Naive thymus-derived CD4-positive, alpha-beta T cell (primary cell): ENCODE measurements at regions of chr6 and their contacts with region 1.

Region 1: GRCh38 chr6:8063761-8064637 is at the start of gene BLOC1S5:
- DNase-seq: peak; percentile 89 to 99 (median 97)
- ATAC-seq: peak; percentile 98
- H3K4me3 ChIP-seq: peak within 1 kb of the TSS; percentile 89
- H3K4me3 Mint-ChIP-seq: peak within 1 kb of the TSS; percentile 91 to 98 (median 95)
- H3K27ac ChIP-seq: peak within 1 kb of the TSS; percentile 92
- H3K27ac Mint-ChIP-seq: peak within 1 kb of the TSS; percentile 91 to 97 (median 95)
- H3K4me1 ChIP-seq: peaks cover 10% of the 10 kb centered on the region in 2 donors
- H3K4me1 Mint-ChIP-seq: peaks cover 9 to 38% (median 28%) of the 10 kb centered on the region in 7 donors
- H3K27me3 ChIP-seq: no peaks in the 10 kb centered on the region
- H3K27me3 Mint-ChIP-seq: no peaks in the 10 kb centered on the region
- total RNA-seq, gene BLOC1S5: 9.6 to 26.2 (median 22.6) TPM

Region 2: DNA sequence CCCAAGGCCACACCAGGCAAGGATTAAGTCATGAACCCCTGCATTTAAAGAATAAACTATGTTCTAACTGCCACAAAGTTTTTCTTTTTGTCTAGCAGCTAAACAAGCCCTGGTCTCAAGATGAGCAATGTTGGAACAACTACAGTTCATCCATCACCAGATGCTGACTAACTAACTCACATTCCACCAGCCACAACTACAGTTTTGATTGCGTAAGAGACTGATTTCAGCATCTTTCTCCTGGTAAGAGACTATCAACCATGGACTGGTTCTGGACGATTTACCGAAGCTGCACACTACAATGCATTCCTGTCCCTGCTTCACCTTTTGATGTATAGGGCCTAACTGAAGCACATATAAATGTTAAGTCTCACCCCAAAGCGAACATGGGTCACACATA is 1786.6 kb before region 1 on chr6:
- CTCF ChIA-PET with region 1: no interaction called
- POLR2A ChIA-PET with region 1: no interaction called
- intact Hi-C with region 1: no loop called
- DNase-seq: no peak
- ATAC-seq: peak; percentile 37
- H3K4me3 ChIP-seq: no peak overlapping the region
- H3K4me3 Mint-ChIP-seq: no peak overlapping the region
- H3K27ac ChIP-seq: no peak overlapping the region
- H3K27ac Mint-ChIP-seq: no peak overlapping the region
- H3K4me1 ChIP-seq: no peaks in the 10 kb centered on the region
- H3K4me1 Mint-ChIP-seq: no peaks in the 10 kb centered on the region
- H3K27me3 ChIP-seq: no peaks in the 10 kb centered on the region
- H3K27me3 Mint-ChIP-seq: peaks cover 6 to 48% (median 25%) of the 10 kb centered on the region in 5 donors

Region 3: GRCh38 chr6:7276199-7276524 is 787.8 kb before region 1 on chr6:
- CTCF ChIA-PET with region 1: no interaction called
- POLR2A ChIA-PET with region 1: no interaction called
- intact Hi-C with region 1: loop called in 1 of 2 experiments (anchors 2 kb)
- DNase-seq: no peak
- ATAC-seq: no peak
- H3K4me3 ChIP-seq: no peak overlapping the region
- H3K4me3 Mint-ChIP-seq: no peak overlapping the region
- H3K27ac ChIP-seq: no peak overlapping the region
- H3K27ac Mint-ChIP-seq: peak overlapping the region in 1 of 9 donors; percentile 56
- H3K4me1 ChIP-seq: no peaks in the 10 kb centered on the region
- H3K4me1 Mint-ChIP-seq: peaks cover 6 to 13% (median 10%) of the 10 kb centered on the region in 7 donors
- H3K27me3 ChIP-seq: no peaks in the 10 kb centered on the region
- H3K27me3 Mint-ChIP-seq: no peaks in the 10 kb centered on the region

Region 4: DNA sequence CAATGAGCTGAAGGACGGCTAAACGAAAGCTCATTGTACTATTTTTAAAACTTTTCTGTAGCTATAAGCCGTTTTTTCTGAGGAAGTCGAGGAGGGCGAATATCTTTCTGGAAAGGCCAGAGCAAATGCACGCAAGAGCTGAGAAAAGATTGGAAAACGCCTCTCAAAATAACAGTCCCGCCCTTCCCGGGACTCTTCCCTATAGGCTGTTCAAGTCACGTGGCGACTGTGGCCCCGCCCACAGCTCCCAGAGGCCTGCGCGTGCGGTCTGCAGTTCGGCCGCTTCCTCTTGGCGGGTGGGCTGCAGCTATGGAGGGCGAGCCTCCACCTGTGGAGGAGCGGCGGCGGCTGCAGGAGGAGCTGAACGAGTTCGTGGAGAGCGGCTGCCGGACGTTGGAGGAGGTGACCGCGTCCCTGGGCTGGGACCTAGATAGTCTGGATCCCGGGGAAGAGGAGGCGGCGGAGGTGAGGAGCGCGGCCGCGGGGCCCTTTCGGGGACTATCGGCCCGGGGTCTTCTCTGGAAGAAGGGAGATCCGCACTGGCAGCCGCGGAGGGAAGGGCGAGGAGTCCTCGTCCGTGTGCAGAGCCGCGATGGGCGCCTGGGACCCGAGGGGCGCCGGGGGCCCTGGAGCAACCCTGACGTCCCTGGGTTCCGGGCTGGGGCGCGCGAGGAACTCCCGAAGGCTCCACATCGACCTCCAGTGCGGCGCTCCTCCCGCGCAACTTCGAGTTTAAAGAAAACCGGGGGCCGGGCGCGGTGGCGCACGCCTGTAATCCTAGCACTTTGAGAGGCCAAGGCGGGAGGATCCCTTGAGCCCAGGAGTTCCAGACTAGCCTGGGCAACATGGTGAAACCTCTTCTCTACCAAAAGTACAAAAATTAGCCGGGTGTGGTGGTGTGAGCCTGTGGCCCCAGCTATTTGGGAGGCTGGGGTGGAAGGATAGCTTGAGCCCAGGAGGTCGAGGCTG is 473.8 kb before region 1 on chr6 and contains the start of gene SNRNP48:
- CTCF ChIA-PET with region 1: no interaction called
- POLR2A ChIA-PET with region 1: no interaction called
- intact Hi-C with region 1: loop called in 1 of 2 experiments (anchors 1 kb)
- DNase-seq: peak; percentile 83 to 93 (median 88)
- ATAC-seq: peak; percentile 99
- H3K4me3 ChIP-seq: peak within 1 kb of the TSS; percentile 89
- H3K4me3 Mint-ChIP-seq: peak within 1 kb of the TSS; percentile 93 to 100 (median 99)
- H3K27ac ChIP-seq: peak within 1 kb of the TSS; percentile 77
- H3K27ac Mint-ChIP-seq: peak within 1 kb of the TSS; percentile 90 to 97 (median 94)
- H3K4me1 ChIP-seq: peaks cover 12 to 17% of the 10 kb centered on the region in 2 donors
- H3K4me1 Mint-ChIP-seq: peaks cover 28 to 62% (median 54%) of the 10 kb centered on the region in 7 donors
- H3K27me3 ChIP-seq: no peaks in the 10 kb centered on the region
- H3K27me3 Mint-ChIP-seq: peaks cover 0 to 2% (median 0%) of the 10 kb centered on the region in 5 donors
- total RNA-seq, gene SNRNP48: 8.6 to 30.4 (median 15.3) TPM

Region 5: GRCh38 chr6:7899101-7899888 is 164.7 kb before region 1 on chr6:
- CTCF ChIA-PET with region 1: no interaction called
- POLR2A ChIA-PET with region 1: no interaction called
- intact Hi-C with region 1: loop called in 1 of 2 experiments (anchors 1 kb)
- DNase-seq: no peak
- ATAC-seq: peak; percentile 48
- H3K4me3 ChIP-seq: no peak overlapping the region
- H3K4me3 Mint-ChIP-seq: no peak overlapping the region
- H3K27ac ChIP-seq: no peak overlapping the region
- H3K27ac Mint-ChIP-seq: no peak overlapping the region
- H3K4me1 ChIP-seq: no peaks in the 10 kb centered on the region
- H3K4me1 Mint-ChIP-seq: no peaks in the 10 kb centered on the region
- H3K27me3 ChIP-seq: no peaks in the 10 kb centered on the region
- H3K27me3 Mint-ChIP-seq: no peaks in the 10 kb centered on the region

Region 6: DNA sequence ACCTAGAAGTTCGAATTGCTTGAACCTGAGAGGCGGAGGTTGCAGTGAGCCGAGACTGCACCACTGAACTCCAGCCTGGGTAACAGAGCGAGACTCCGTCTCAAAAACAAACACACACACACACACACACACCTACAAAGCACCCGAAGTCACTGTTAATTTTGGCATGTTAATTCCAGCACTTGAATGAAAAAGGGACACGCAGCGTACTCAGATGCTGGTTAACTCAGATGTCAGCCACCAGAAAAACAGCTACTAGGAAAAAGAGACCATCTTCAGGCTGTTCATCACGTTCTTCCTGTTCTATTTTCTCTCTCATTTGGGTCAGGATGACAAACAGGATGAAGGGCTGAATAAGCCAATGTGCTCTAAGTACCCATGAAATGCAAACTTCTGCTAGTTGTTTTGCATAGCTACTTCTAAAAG is 46.7 kb before region 1 on chr6:
- CTCF ChIA-PET with region 1: no interaction called
- POLR2A ChIA-PET with region 1: interaction called, 4 read pairs
- intact Hi-C with region 1: loop called (anchors 1 to 2 kb)
- DNase-seq: peak in 1 of 9 donors; percentile 46
- ATAC-seq: peak; percentile 74
- H3K4me3 ChIP-seq: no peak overlapping the region
- H3K4me3 Mint-ChIP-seq: peak overlapping the region in 4 of 10 donors; percentile 71 to 95 (median 90)
- H3K27ac ChIP-seq: peak overlapping the region; percentile 64
- H3K27ac Mint-ChIP-seq: peak overlapping the region in 5 of 9 donors; percentile 24 to 98 (median 92)
- H3K4me1 ChIP-seq: no peaks in the 10 kb centered on the region
- H3K4me1 Mint-ChIP-seq: peaks cover 0 to 20% (median 5%) of the 10 kb centered on the region in 7 donors
- H3K27me3 ChIP-seq: no peaks in the 10 kb centered on the region
- H3K27me3 Mint-ChIP-seq: no peaks in the 10 kb centered on the region

Region 7: GRCh38 chr6:8219352-8219943 is 155.4 kb after region 1 on chr6:
- CTCF ChIA-PET with region 1: no interaction called
- POLR2A ChIA-PET with region 1: no interaction called
- intact Hi-C with region 1: loop called in 1 of 2 experiments (anchors 2 kb)
- DNase-seq: peak in 7 of 9 donors; percentile 4 to 53 (median 32)
- ATAC-seq: peak; percentile 75
- H3K4me3 ChIP-seq: no peak overlapping the region
- H3K4me3 Mint-ChIP-seq: no peak overlapping the region
- H3K27ac ChIP-seq: no peak overlapping the region
- H3K27ac Mint-ChIP-seq: no peak overlapping the region
- H3K4me1 ChIP-seq: no peaks in the 10 kb centered on the region
- H3K4me1 Mint-ChIP-seq: no peaks in the 10 kb centered on the region
- H3K27me3 ChIP-seq: no peaks in the 10 kb centered on the region
- H3K27me3 Mint-ChIP-seq: peaks cover 5 to 19% (median 9%) of the 10 kb centered on the region in 5 donors